ENCODE measurements at regions of chr21 and their contacts with region 1.

Region 1: DNA sequence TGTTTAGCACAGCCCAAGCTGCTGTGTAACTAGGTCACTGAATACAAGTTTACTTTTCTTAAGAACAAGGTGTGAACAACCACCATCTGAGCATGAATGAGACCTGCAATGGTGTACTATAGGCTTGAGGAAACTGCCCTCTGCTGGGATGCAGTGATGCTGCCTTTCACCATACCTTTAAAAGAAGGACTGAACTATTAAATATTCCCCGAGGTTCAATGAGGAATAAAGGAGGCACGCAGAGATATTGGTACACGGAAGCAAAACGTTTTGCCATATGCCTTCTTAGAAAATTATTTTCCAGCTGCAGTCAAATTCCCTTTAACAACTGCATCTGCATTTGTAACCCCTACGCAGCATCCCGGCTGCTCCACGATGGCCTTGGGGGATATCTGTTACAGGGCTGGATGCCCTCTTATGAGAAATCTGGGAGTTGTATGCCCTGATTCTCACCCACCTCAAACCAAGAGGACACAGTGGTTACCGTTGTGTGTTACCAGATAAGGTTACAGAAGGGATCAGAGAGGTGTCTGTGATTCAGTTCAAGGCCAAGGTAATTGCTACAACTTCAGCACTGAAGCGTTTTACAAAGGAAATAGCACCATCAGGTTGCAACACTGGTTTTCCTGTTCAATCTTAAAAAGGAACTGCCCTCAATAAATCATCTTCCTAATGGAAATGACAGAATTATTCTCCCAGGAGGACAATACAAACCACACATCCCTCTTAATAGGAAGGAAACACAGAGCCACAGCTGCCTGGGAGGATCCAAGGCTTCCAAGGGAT is 470.5 kb downstream of the LTN1 start:
- DNase-seq: peak; percentile 88
- H3K4me3 ChIP-seq: no peak overlapping the region
- H3K27ac ChIP-seq: peak overlapping the region; percentile 72
- H3K4me1 ChIP-seq: peaks cover 45% of the 10 kb centered on the region
- H3K27me3 ChIP-seq: no peaks in the 10 kb centered on the region
- CTCF ChIP-seq: peak; percentile 44 to 56
- POLR2A ChIP-seq: no peak

Region 2: GRCh38 chr21:26850108-26850643 is 1672.0 kb before region 1 on chr21:
- CTCF ChIA-PET with region 1: interaction called, 3 read pairs
- POLR2A ChIA-PET with region 1: no interaction called
- dilution Hi-C with region 1: no loop called
- intact Hi-C with region 1: loop called (anchors 1 kb)
- DNase-seq: peak; percentile 75
- H3K4me3 ChIP-seq: no peak overlapping the region
- H3K27ac ChIP-seq: no peak overlapping the region
- H3K4me1 ChIP-seq: peaks cover 11% of the 10 kb centered on the region
- H3K27me3 ChIP-seq: peaks cover 5 to 16% of the 10 kb centered on the region in 2 experiments
- CTCF ChIP-seq: no peak
- POLR2A ChIP-seq: no peak

Region 3: GRCh38 chr21:28111151-28111619 is 411.0 kb before region 1 on chr21:
- CTCF ChIA-PET with region 1: no interaction called
- POLR2A ChIA-PET with region 1: no interaction called
- dilution Hi-C with region 1: no loop called
- intact Hi-C with region 1: loop called (anchors 2 kb)
- DNase-seq: peak; percentile 85
- H3K4me3 ChIP-seq: peak overlapping the region in 1 of 3 experiments; percentile 46
- H3K27ac ChIP-seq: peak overlapping the region; percentile 1
- H3K4me1 ChIP-seq: peaks cover 14% of the 10 kb centered on the region
- H3K27me3 ChIP-seq: no peaks in the 10 kb centered on the region
- CTCF ChIP-seq: no peak
- POLR2A ChIP-seq: no peak

Region 4: DNA sequence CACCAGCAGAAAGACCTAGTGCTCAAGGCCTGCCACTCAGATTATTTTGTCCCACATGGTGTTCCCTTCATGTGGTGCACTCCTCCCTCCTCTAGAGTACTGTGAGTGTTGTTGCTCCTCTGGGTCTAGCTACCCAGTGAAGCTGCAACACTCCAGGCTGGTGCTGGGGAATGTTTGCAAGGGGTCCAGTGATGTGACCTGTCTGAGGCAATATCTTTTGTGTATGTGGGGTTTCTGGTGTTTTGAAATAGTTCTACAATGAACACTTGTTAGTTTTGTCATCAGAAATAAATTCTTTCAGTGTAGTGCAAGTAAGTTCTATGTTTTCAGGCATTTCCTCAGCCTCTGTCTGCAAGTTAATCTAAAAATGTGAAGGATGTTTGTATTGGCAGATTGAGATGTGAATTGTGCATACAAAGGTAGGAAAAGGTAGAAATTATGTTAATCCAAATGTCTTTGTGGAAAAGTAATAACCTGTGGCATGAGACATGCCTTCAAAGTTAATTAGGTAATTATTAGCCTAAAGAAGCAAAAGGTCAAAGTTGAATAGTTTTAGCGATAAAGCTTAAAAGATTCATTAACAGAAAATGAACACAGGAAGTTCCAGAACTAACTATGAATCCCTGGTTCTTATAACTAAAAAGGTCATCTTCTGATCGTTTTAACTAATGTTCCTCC is 146.4 kb before region 1 on chr21:
- CTCF ChIA-PET with region 1: no interaction called
- POLR2A ChIA-PET with region 1: no interaction called
- dilution Hi-C with region 1: no loop called
- intact Hi-C with region 1: no loop called
- DNase-seq: peak; percentile 78
- H3K4me3 ChIP-seq: no peak overlapping the region
- H3K27ac ChIP-seq: no peak overlapping the region
- H3K4me1 ChIP-seq: no peaks in the 10 kb centered on the region
- H3K27me3 ChIP-seq: no peaks in the 10 kb centered on the region
- CTCF ChIP-seq: no peak
- POLR2A ChIP-seq: no peak

Region 5: GRCh38 chr21:28537371-28538079 is 15.3 kb after region 1 on chr21:
- CTCF ChIA-PET with region 1: interaction called, 6 read pairs
- POLR2A ChIA-PET with region 1: no interaction called
- dilution Hi-C with region 1: no loop called
- intact Hi-C with region 1: loop called (anchors 1 kb)
- DNase-seq: peak; percentile 82
- H3K4me3 ChIP-seq: no peak overlapping the region
- H3K27ac ChIP-seq: no peak overlapping the region
- H3K4me1 ChIP-seq: peaks cover 37% of the 10 kb centered on the region
- H3K27me3 ChIP-seq: no peaks in the 10 kb centered on the region
- CTCF ChIP-seq: no peak
- POLR2A ChIP-seq: no peak

Region 6: GRCh38 chr21:28633839-28634555 is 111.8 kb after region 1 on chr21:
- CTCF ChIA-PET with region 1: interaction called, 7 read pairs
- POLR2A ChIA-PET with region 1: no interaction called
- dilution Hi-C with region 1: no loop called
- intact Hi-C with region 1: loop called (anchors 1 kb)
- DNase-seq: peak; percentile 94
- H3K4me3 ChIP-seq: peak overlapping the region in 1 of 3 experiments; percentile 1
- H3K27ac ChIP-seq: peak overlapping the region; percentile 97
- H3K4me1 ChIP-seq: peaks cover 59% of the 10 kb centered on the region
- H3K27me3 ChIP-seq: no peaks in the 10 kb centered on the region
- CTCF ChIP-seq: no peak
- POLR2A ChIP-seq: peak; percentile 12

Region 7: DNA sequence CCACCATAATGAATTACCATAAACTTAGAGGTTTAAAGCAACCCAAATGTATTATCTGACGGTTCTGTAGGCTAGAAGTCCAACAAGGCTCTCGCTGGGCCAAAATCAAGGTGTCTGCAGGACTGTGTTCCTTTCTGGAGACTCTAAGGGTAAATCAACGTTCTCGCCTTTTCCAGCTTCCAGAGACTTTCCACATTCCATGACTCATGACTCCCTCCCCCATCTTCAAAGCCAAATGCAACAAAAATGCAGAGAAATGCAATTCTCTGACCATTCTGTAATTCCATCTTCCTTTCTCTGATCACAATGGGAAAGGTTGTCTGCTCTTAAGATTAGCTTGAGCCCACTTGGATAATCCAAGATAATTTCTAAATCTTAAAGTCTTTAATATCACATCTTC is 183.4 kb after region 1 on chr21:
- CTCF ChIA-PET with region 1: no interaction called
- POLR2A ChIA-PET with region 1: no interaction called
- dilution Hi-C with region 1: no loop called
- intact Hi-C with region 1: no loop called
- DNase-seq: no peak
- H3K4me3 ChIP-seq: no peak overlapping the region
- H3K27ac ChIP-seq: no peak overlapping the region
- H3K4me1 ChIP-seq: no peaks in the 10 kb centered on the region
- H3K27me3 ChIP-seq: no peaks in the 10 kb centered on the region
- CTCF ChIP-seq: no peak
- POLR2A ChIP-seq: no peak